Activated B cell treated with CpG ODN at 0.5 μM for 24 hours (primary cell): ENCODE measurements at regions of chr14 and their contacts with region 1.

Region 1: DNA sequence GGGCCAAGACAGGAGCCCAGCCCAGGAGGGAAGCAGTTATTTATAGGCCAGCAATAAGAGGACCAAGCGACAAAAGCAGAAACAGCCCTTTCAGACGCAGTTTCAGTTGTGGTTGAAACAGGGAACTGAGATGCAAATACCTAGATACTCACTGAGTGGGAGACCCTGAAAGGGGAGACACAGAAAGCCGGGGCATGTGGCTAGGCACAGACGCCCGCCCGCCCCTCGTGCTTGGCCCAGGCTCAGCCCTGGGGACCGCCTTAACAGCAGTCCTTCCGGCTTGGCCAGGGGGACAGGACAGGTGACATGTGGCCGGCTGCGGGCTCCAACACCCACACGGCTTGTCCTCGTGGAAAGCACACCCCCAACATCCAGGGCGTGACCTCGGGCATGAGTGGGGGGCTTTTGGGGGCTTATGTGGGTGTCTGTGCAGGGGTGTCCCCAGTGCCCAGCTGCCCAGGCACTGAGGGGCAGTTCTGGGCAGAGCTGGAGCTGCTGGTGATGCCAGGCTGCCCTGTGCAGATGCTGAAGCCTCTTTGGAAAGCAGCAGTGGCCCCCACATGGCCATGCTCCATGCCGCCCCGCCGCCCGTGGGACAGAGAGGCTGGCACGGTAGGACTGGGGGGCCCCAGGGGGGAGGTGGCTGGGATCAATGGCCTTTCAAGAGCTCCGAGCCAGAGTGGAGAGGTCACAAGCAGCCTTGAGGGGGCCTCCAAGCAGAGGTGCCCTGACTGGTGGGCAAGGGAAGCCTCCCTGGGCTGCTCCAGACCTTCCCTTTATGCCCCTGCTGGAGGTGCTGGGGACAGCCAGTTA is 2.1 kb downstream of the PLD4 start:
- DNase-seq: peak; percentile 60
- ATAC-seq: peak; percentile 58
- H3K4me3 Mint-ChIP-seq: peak overlapping the region; percentile 88
- H3K27ac Mint-ChIP-seq: peak overlapping the region; percentile 91
- H3K4me1 Mint-ChIP-seq: peaks cover 61% of the 10 kb centered on the region
- H3K27me3 Mint-ChIP-seq: no peaks in the 10 kb centered on the region
- CTCF ChIP-seq: no peak

Region 2: GRCh38 chr14:104689109-104689880 is 237.5 kb before region 1 on chr14 and contains the start of gene INF2:
- CTCF ChIA-PET with region 1: no interaction called
- POLR2A ChIA-PET with region 1: no interaction called
- intact Hi-C with region 1: loop called (anchors 10 kb)
- DNase-seq: peak; percentile 63
- ATAC-seq: peak; percentile 78
- H3K4me3 Mint-ChIP-seq: peak within 1 kb of the TSS; percentile 72
- H3K27ac Mint-ChIP-seq: no peak within 1 kb of the TSS
- H3K4me1 Mint-ChIP-seq: peaks cover 68% of the 10 kb centered on the region
- H3K27me3 Mint-ChIP-seq: no peaks in the 10 kb centered on the region
- CTCF ChIP-seq: no peak
- total RNA-seq, gene INF2: 38.6 and 47.2 TPM in 2 replicates

Region 3: GRCh38 chr14:104800015-104800770 is 126.6 kb before region 1 on chr14:
- CTCF ChIA-PET with region 1: no interaction called
- POLR2A ChIA-PET with region 1: no interaction called
- intact Hi-C with region 1: no loop called
- DNase-seq: peak; percentile 78
- ATAC-seq: peak; percentile 76
- H3K4me3 Mint-ChIP-seq: peak overlapping the region; percentile 73
- H3K27ac Mint-ChIP-seq: peak overlapping the region; percentile 87
- H3K4me1 Mint-ChIP-seq: peaks cover 47% of the 10 kb centered on the region
- H3K27me3 Mint-ChIP-seq: no peaks in the 10 kb centered on the region
- CTCF ChIP-seq: no peak

Region 4: GRCh38 chr14:104895786-104896661 is 30.8 kb before region 1 on chr14:
- CTCF ChIA-PET with region 1: interaction called, 10 read pairs
- POLR2A ChIA-PET with region 1: interaction called, 5 read pairs
- intact Hi-C with region 1: loop called (anchors 1 kb)
- DNase-seq: no peak
- ATAC-seq: no peak
- H3K4me3 Mint-ChIP-seq: no peak overlapping the region
- H3K27ac Mint-ChIP-seq: no peak overlapping the region
- H3K4me1 Mint-ChIP-seq: peaks cover 6% of the 10 kb centered on the region
- H3K27me3 Mint-ChIP-seq: peaks cover 5% of the 10 kb centered on the region
- CTCF ChIP-seq: no peak

Region 5: GRCh38 chr14:105020815-105021655 is 94.2 kb after region 1 on chr14 and contains the start of gene CDCA4:
- CTCF ChIA-PET with region 1: no interaction called
- POLR2A ChIA-PET with region 1: interaction called, 5 read pairs
- intact Hi-C with region 1: loop called (anchors 2 kb)
- DNase-seq: peak; percentile 97
- ATAC-seq: peak; percentile 84
- H3K4me3 Mint-ChIP-seq: peak within 1 kb of the TSS; percentile 92
- H3K27ac Mint-ChIP-seq: peak within 1 kb of the TSS; percentile 94
- H3K4me1 Mint-ChIP-seq: peaks cover 62% of the 10 kb centered on the region
- H3K27me3 Mint-ChIP-seq: no peaks in the 10 kb centered on the region
- CTCF ChIP-seq: no peak
- total RNA-seq, gene CDCA4: 11.7 and 13.6 TPM in 2 replicates